T-cell (primary cell): ENCODE measurements at regions of chr9 and their contacts with region 1.

Region 1: DNA sequence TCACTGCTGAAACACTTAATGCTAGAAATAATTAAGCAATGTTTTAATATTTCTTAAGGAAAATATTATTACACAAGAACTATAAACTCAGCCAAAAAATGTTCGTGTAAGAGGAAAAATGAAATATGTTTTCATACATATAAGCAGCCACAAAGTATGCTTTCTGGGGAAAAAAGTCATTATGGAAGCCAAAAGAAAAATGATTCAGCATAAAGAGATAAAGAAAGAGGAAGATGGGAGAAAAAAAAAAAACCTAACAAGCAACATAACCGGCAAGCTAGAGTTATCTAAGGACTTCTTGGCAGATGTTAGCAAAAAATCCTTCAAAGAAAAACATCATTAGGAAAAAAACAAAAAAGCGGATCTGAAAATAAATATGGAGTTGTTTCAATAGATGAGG is 179.1 kb downstream of the MUSK start:
- DNase-seq: no peak
- ATAC-seq: no peak
- H3K4me3 ChIP-seq: no peak overlapping the region
- H3K4me3 Mint-ChIP-seq: no peak overlapping the region
- H3K27ac ChIP-seq: no peak overlapping the region
- H3K27ac Mint-ChIP-seq: no peak overlapping the region
- H3K4me1 ChIP-seq: no peaks in the 10 kb centered on the region
- H3K4me1 Mint-ChIP-seq: no peaks in the 10 kb centered on the region
- H3K27me3 ChIP-seq: no peaks in the 10 kb centered on the region
- H3K27me3 Mint-ChIP-seq: no peaks in the 10 kb centered on the region

Region 2: GRCh38 chr9:110520120-110520701 is 327.5 kb before region 1 on chr9:
- CTCF ChIA-PET with region 1: no interaction called
- POLR2A ChIA-PET with region 1: no interaction called
- DNase-seq: no peak
- ATAC-seq: no peak
- H3K4me3 ChIP-seq: no peak overlapping the region
- H3K4me3 Mint-ChIP-seq: no peak overlapping the region
- H3K27ac ChIP-seq: no peak overlapping the region
- H3K27ac Mint-ChIP-seq: no peak overlapping the region
- H3K4me1 ChIP-seq: no peaks in the 10 kb centered on the region
- H3K4me1 Mint-ChIP-seq: no peaks in the 10 kb centered on the region
- H3K27me3 ChIP-seq: no peaks in the 10 kb centered on the region
- H3K27me3 Mint-ChIP-seq: no peaks in the 10 kb centered on the region

Region 3: DNA sequence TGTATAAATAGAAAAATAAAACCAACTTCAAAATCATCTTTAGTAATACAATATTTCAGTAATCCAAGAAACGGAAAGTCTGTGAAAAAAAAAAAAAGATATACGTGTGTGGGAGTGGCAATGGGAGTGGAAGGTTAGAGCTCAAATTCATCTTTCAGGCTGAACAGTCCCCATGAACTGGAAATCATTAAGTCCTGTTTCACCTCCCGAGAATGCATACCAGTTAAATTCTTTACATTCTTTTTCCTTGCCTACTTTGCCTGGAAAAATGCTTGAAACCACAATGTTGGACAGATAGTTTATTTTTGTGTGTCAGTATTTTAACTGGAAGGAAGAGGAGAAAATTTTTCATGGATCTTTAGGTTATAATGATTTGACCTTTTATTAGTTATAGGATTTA is 12.3 kb before region 1 on chr9:
- CTCF ChIA-PET with region 1: no interaction called
- POLR2A ChIA-PET with region 1: interaction called in 1 of 2 experiments, 10 read pairs
- DNase-seq: no peak
- ATAC-seq: no peak
- H3K4me3 ChIP-seq: no peak overlapping the region
- H3K4me3 Mint-ChIP-seq: no peak overlapping the region
- H3K27ac ChIP-seq: no peak overlapping the region
- H3K27ac Mint-ChIP-seq: no peak overlapping the region
- H3K4me1 ChIP-seq: no peaks in the 10 kb centered on the region
- H3K4me1 Mint-ChIP-seq: no peaks in the 10 kb centered on the region
- H3K27me3 ChIP-seq: no peaks in the 10 kb centered on the region
- H3K27me3 Mint-ChIP-seq: no peaks in the 10 kb centered on the region